Gastrocnemius medialis (tissue), 4 donors: ENCODE measurements at regions of chr2 and their contacts with region 1.

Region 1: DNA sequence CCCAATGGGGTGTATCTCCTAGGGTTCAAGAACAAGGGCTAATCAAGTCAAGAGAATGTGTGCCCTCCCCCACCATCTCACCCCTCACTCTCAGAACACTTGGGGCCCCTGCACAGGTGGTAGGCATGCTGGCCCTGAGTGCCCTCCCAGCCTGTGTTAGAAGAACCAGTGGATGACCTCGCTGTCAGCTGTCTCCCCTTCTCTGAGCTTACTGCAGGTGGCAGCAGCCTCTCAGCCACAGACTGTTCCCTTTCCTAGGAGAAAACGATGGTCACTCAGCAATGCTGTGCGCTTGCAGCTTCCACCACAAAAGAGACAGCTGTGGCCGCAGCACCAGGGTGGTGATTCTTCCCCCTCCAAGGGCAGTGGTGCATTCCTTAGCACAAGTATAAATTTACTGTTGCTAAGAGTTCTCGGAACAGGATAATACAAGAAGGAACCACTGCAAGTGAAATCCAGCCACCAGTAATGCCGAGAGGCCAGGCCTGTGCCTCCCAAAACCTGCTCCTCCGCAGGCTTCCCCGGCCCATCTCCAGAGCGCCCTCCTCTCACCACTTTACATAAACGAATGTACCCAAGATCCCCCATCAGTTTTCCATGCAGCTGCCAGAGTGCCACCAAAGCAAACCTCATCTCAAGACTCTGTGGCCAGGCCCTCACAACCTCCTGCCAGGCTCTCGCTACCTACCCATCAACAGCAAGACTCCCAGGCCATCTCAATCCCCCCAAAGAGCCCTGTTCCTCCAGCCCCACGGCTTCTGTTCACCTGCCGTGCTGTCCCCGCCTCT is 935 bp upstream of the RAMP1 start:
- DNase-seq: peak; percentile 56 to 81
- ATAC-seq: peak; percentile 83 to 89
- H3K4me3 ChIP-seq: peak overlapping the region in 3 of 4 donors; percentile 15 to 62 (median 59)
- H3K27ac ChIP-seq: peak overlapping the region; percentile 79 to 92 (median 86)
- H3K4me1 ChIP-seq: peaks cover 13 to 39% of the 10 kb centered on the region in 2 donors
- H3K27me3 ChIP-seq: no peaks in the 10 kb centered on the region
- CTCF ChIP-seq: peak; percentile 73 to 90 (median 80)
- POLR2A ChIP-seq: peak in 1 of 2 donors; percentile 52

Region 2: DNA sequence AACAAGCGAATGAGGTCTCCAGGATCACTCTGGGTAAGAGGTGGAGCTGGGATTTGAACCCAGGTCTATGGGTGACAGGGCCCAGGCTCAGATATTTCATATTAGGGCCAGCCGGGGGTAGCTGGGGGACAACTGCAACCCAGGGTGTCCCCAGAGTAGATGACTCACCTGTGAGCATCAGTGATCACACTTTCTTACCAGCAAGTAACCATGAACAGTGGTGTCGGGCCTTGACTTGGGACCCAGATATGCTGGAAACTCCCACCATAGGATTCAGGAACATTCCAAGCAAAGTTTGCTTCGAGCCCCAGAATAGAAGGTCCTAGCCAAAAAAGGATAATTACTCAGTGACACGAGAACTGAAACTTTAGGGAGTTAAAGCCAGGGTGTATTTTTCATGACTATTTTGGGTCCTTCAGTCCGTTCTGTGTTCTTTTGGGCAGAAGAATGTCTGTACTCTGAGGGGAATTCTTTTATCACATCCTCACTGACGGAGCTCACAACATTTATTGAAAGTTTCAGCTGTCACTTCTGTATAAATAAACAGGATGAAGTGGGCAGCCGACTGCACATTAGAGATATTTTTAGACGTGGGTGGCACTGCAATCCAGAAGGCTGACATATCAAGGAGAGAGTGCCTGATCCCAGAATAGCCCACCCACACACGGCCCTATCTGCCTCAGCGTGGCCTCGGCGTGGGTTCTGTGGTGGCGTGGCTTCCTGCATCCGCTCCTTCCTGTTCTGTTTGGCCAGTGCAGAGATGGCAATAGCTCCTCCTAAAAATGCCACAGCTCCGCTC is 46.5 kb after region 1 on chr2:
- in situ Hi-C with region 1: no loop called
- intact Hi-C with region 1: loop called (anchors 1 kb)
- DNase-seq: peak; percentile 61 to 81
- ATAC-seq: peak; percentile 96
- H3K4me3 ChIP-seq: peak overlapping the region; percentile 15 to 29 (median 20)
- H3K27ac ChIP-seq: peak overlapping the region; percentile 85 to 99 (median 98)
- H3K4me1 ChIP-seq: peaks cover 12 to 20% of the 10 kb centered on the region in 2 donors
- H3K27me3 ChIP-seq: no peaks in the 10 kb centered on the region
- CTCF ChIP-seq: peak in 2 of 5 experiments; percentile 7 to 18
- POLR2A ChIP-seq: peak; percentile 69

Region 3: DNA sequence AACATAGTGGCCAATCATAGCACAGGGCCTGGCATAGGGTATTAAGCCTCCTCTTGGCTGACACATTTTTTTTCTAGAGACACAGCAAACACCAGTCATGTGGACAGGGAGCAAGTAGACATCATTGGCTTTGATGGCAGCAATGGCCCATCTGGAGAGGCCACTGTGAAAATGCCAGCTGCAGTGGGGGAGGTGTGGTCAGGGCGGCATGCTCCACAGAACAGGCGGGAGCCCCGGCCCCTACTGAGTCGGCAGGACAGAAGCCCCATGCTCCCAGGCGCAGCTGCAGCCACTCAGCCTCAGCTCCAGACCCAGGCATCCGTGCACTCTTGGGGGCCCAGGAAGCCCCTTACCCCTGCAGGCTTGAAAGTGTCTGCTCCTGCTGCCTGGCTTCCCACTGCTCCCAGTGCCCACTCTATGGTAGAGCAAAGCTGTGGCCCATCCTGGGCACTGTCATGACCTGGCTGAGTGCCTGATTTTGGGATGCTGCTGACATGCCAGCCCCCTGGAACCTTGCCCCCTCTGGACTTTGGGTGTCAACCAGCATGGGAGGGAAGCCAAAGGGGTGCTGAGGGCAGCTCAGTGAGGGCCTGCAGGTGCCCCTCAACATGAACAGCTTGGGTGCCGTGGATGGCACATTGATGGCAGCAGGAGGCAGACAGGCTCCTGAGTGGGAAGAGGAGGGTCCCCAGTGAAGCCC is 85.1 kb after region 1 on chr2:
- in situ Hi-C with region 1: no loop called
- intact Hi-C with region 1: no loop called
- DNase-seq: no peak
- ATAC-seq: no peak
- H3K4me3 ChIP-seq: no peak overlapping the region
- H3K27ac ChIP-seq: no peak overlapping the region
- H3K4me1 ChIP-seq: no peaks in the 10 kb centered on the region
- H3K27me3 ChIP-seq: no peaks in the 10 kb centered on the region
- CTCF ChIP-seq: no peak
- POLR2A ChIP-seq: no peak

Region 4: DNA sequence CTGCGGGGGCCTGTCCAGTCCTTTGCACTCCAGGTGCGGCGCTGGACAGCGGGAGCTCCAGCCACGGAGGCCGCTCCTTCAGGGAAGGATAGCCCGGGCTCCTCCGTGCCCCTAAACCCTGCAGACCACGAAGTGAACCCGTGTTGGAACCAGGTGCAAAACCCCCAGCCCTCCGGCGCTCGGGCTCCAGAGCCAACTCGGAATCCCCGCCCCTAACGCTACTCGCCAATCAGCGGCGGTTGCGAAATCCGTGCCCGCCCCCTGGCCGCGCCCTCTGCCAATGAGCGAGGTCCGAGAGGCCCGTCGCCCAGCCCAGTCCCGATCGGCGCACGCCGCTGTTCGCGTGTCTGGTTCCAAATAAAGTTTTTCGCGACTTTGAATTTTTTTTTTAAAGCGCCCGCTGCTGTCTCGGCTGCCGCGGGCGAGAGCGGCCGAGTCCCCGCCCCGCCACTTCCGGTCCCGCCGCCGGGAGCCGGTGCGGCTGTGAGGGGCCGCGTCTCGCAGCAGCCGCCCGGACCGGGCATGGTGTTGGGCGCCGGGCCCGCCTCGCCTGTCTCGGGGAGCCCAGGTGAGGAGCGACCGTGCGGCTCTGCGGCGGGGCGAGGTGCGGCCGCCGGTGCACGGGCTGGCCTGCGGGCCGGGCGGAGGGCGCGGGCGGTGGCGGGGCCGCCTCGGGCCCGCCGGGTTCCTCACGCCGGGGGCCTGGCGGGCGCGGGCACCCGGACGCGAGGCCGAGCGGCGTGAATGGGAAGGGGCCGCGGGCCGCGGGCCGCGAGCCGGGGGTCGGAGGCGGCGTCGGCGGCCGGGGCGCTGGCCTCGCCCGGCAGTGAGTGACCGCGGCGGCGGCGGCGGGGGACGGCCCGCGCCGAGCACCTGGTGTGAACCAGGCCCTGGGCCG is 108.3 kb after region 1 on chr2 and contains the start of gene UBE2F:
- in situ Hi-C with region 1: no loop called
- intact Hi-C with region 1: loop called (anchors 1 kb)
- DNase-seq: peak; percentile 95 to 96
- ATAC-seq: peak; percentile 96 to 97
- H3K4me3 ChIP-seq: peak within 1 kb of the TSS; percentile 80 to 90 (median 88)
- H3K27ac ChIP-seq: peak within 1 kb of the TSS; percentile 75 to 88 (median 84)
- H3K4me1 ChIP-seq: peaks cover 21 to 42% of the 10 kb centered on the region in 2 donors
- H3K27me3 ChIP-seq: no peaks in the 10 kb centered on the region
- CTCF ChIP-seq: no peak
- POLR2A ChIP-seq: peak; percentile 90 to 92
- total RNA-seq, gene UBE2F: 67.3 to 97.3 (median 81.2) TPM

Region 5: DNA sequence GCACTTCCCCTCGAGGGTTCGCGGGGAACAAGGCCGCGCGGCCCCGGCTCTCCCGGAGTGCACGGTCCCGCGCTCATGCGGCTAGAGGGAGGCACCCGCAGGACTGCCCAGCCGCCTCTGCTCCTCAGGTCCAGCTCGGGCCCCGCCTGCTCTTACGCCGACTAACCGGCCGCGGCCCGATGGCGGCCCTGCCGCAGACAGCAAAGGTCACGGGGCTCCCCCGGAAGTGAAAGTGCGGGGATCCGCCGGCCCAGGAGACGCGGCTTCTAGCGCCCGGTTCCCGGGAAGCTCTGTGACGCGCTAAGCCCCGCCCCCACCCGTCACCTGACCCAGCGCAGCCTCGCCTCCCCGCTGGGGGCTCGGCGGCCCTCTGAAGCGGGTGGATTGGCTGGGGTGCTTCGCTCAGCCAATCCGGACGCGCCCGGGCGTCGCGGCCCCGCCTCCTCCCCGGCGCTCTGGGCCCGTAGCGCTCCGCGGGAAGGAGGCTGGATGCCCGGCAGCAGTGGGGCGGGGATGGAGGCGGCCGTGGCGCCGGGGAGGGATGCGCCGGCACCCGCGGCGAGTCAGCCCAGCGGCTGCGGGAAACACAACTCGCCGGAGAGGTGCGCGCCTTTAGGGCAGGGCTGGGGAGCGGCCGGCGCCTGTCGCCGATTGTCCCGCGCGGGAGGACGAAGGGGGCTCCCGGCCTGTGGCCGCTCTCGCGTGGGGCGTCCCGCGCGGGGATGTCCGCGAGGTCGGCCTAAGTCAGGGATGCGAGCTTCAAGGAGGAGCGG is 202.2 kb after region 1 on chr2 and contains the start of gene SCLY:
- in situ Hi-C with region 1: no loop called
- intact Hi-C with region 1: loop called (anchors 1 kb)
- DNase-seq: peak; percentile 97
- ATAC-seq: peak; percentile 96 to 97
- H3K4me3 ChIP-seq: peak within 1 kb of the TSS; percentile 76 to 100 (median 94)
- H3K27ac ChIP-seq: peak within 1 kb of the TSS; percentile 86 to 98 (median 92)
- H3K4me1 ChIP-seq: peaks cover 13 to 26% of the 10 kb centered on the region in 2 donors
- H3K27me3 ChIP-seq: no peaks in the 10 kb centered on the region
- CTCF ChIP-seq: no peak
- POLR2A ChIP-seq: peak; percentile 90 to 91
- total RNA-seq, gene SCLY: 3.3 to 9.7 (median 5.6) TPM

Region 6: DNA sequence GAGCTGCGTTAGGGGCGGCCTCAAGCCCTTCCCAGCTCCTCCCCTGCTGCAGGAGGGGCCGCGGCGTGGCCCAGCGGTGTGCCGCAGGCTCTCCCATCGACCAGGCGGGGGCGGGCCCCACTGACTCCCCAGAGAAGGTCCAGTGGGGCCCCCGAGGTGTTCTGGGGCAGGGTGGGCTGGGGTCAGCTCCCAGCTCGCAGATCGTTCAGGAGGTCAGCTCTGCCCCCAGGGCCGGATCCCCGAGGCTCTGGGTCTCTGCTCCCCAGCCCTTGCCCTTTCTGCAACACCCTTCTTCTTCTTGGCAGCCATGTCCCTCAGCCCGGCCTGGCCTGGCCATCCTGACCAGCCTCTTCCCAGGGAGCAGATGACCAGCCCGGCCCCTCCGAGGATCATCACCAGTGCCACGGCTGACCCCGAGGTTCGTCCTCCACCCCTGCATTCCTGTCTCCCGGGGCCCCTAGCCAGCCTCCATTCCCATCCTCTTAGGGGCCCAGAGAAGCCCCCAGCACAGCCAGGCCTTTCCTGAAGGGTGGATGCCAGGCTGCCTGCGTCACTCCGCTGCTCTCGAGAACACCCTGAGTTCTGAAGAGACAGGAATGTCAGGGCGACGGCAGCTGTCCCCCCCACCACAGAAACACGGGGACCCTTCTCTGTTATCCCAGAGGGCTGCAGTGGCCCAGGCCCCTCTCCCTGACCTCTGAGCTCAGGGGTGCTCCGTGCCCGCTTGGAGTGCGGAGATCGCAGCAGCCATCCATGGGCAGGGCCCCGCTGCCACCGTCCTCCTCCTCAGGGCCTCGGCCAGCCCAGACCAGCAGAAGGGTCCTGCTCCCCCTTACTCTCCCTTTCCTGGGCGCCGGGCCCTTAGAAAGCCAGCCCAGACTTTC is 269.1 kb after region 1 on chr2:
- in situ Hi-C with region 1: no loop called
- intact Hi-C with region 1: no loop called
- DNase-seq: no peak
- ATAC-seq: peak in 1 of 2 donors; percentile 25
- H3K4me3 ChIP-seq: no peak overlapping the region
- H3K27ac ChIP-seq: no peak overlapping the region
- H3K4me1 ChIP-seq: peaks cover 0 to 3% of the 10 kb centered on the region in 2 donors
- H3K27me3 ChIP-seq: no peaks in the 10 kb centered on the region
- CTCF ChIP-seq: no peak
- POLR2A ChIP-seq: no peak

Region 7: GRCh38 chr2:238203094-238203972 is 344.8 kb after region 1 on chr2 and contains the start of gene ILKAP:
- in situ Hi-C with region 1: no loop called
- intact Hi-C with region 1: loop called (anchors 2 kb)
- DNase-seq: peak; percentile 81 to 87
- ATAC-seq: peak; percentile 95 to 96
- H3K4me3 ChIP-seq: peak within 1 kb of the TSS; percentile 56 to 85 (median 66)
- H3K27ac ChIP-seq: peak within 1 kb of the TSS; percentile 83 to 94 (median 91)
- H3K4me1 ChIP-seq: peaks cover 31 to 43% of the 10 kb centered on the region in 2 donors
- H3K27me3 ChIP-seq: no peaks in the 10 kb centered on the region
- CTCF ChIP-seq: peak in 1 of 5 experiments; percentile 24
- POLR2A ChIP-seq: peak; percentile 93 to 97
- total RNA-seq, gene ILKAP: 16.6 to 30.1 (median 23.3) TPM